Esophagus squamous epithelium (tissue), 5 donors: ENCODE measurements at regions of chr10 and their contacts with region 1.

Region 1: DNA sequence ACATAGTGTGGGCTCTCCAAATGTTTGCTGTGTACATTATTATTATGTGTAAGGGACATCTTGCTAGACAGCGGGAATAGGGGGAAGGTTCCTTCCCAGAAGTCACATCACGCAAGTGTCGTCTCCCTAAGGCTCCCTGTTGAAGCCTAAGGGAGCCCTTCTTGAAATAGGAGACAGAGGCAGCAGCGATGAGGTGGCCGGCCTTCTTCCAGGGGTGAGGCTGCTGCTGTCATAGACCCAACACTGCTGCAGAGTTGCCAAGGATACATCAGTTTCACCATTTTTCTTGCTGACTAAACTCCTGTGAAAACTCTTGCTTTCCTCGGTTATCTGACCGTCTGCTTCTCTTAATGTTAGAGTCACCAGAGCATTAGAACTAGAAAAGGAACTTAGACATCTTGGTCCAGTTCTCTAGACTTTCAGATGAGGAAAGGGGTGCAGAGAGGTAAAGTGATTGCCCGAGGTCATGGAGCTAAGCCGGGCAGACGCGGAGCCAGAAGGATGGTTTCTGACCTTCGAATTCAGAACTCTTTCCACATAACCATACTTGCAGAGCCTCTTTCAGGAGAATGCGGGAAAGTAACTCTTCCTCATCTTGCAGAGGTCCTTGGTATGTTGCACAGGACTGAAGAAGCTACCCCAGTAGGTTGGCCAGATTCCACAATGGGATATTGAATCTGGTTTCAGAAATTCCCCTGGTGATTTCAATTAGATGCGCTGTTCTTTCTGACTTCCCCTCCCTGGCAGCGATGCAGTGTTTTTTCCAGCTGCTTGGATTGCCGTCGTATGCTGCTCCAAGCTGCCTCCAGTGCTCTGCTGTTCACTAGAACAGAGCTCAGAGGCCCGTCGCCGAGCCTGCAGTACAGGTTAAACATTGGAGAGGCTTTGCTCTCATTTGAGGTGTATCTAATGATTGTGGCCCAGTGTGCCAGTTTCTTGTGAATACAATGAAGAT is 217.1 kb downstream of the CAMK1D start:
- DNase-seq: no peak
- H3K4me3 ChIP-seq: no peak overlapping the region
- H3K27ac ChIP-seq: peak overlapping the region in 2 of 4 donors; percentile 8 to 34
- H3K4me1 ChIP-seq: peaks cover 0 to 36% (median 0%) of the 10 kb centered on the region in 3 donors
- H3K27me3 ChIP-seq: no peaks in the 10 kb centered on the region
- CTCF ChIP-seq: no peak
- POLR2A ChIP-seq: no peak

Region 2: DNA sequence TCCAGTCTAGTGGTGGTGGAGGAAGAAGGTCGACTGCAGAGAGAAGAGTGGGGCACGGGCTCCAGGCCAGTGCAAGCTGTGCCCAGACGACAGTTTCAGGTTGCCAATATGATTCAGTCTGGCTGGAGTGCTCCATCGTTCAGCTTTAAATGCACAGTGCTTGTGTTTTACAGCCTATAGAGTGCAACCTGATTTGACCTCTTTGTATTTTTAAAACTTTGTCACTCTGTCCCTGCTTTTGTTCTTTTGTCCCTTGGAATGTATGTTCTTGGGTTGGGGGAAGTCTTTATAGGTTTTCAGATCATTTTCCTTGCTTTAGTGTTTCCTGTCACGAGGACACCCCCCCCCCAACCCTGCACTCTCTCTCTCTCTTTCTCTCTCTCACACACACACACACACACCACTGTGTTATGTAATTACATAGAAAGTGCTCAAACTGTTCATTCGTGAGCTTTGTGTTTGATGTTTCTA is 19.1 kb before region 1 on chr10:
- intact Hi-C with region 1: loop called (anchors 2 kb)
- DNase-seq: no peak
- H3K4me3 ChIP-seq: no peak overlapping the region
- H3K27ac ChIP-seq: no peak overlapping the region
- H3K4me1 ChIP-seq: no peaks in the 10 kb centered on the region
- H3K27me3 ChIP-seq: no peaks in the 10 kb centered on the region
- CTCF ChIP-seq: no peak
- POLR2A ChIP-seq: no peak

Region 3: GRCh38 chr10:12656518-12657142 is 90.2 kb after region 1 on chr10:
- intact Hi-C with region 1: no loop called
- DNase-seq: no peak
- H3K4me3 ChIP-seq: no peak overlapping the region
- H3K27ac ChIP-seq: no peak overlapping the region
- H3K4me1 ChIP-seq: peaks cover 0 to 5% (median 0%) of the 10 kb centered on the region in 3 donors
- H3K27me3 ChIP-seq: no peaks in the 10 kb centered on the region
- CTCF ChIP-seq: peak; percentile 27 to 85 (median 68)
- POLR2A ChIP-seq: no peak